Calu3 (cell line): ENCODE measurements at regions of chr18 and their contacts with region 1.

Region 1: DNA sequence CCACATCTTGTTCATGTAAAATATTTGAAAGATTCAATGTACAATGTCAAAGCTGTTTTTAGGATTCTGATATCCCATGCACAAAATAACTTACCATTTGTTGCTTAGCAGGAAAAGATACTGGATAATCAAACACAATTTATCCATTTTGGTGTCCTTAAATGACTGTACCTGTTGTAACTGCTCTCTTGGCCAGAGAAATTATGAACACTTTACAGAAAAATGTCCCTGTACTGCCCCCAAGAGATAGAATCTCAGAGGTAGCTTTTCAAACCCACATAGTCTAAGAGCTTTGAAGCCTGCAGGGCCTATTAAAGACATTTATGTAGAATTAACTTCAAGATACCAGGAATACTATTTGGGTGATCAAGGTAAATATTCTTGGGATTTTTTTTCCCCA is 12.2 kb upstream of the ME2 start:
- DNase-seq: no peak
- H3K4me3 Mint-ChIP-seq: no peak overlapping the region
- H3K27ac Mint-ChIP-seq: no peak overlapping the region
- H3K4me1 Mint-ChIP-seq: peaks cover 16% of the 10 kb centered on the region
- H3K27me3 Mint-ChIP-seq: no peaks in the 10 kb centered on the region
- CTCF ChIP-seq: no peak

Region 2: DNA sequence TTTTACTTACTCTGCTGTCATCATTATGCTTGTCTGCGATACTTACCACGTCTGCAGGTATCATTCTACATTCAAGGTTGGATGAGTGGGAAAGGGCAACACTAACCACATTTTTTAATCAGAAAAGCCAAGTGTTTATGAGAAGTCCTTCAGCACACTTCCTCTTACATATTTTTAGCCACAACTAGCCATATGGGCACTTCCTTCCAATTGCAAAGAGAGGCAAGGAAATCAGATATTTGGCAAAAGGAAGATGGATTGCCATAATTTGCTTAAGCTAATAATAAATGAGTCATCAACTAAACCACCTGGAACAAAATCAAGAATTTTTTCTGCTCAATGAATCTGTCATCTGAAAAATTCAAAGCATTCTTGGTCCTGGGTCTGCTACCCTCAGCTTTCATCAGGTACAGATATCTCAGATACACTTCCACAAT is 30.2 kb before region 1 on chr18:
- CTCF ChIA-PET with region 1: interaction called, 4 read pairs
- intact Hi-C with region 1: loop called (anchors 1 kb)
- DNase-seq: peak; percentile 51
- H3K4me3 Mint-ChIP-seq: no peak overlapping the region
- H3K27ac Mint-ChIP-seq: peak overlapping the region; percentile 87
- H3K4me1 Mint-ChIP-seq: peaks cover 42% of the 10 kb centered on the region
- H3K27me3 Mint-ChIP-seq: no peaks in the 10 kb centered on the region
- CTCF ChIP-seq: no peak

Region 3: GRCh38 chr18:50853863-50854271 is 12.9 kb before region 1 on chr18:
- CTCF ChIA-PET with region 1: no interaction called
- intact Hi-C with region 1: loop called (anchors 2 kb)
- DNase-seq: peak; percentile 42
- H3K4me3 Mint-ChIP-seq: peak overlapping the region; percentile 13
- H3K27ac Mint-ChIP-seq: peak overlapping the region; percentile 50
- H3K4me1 Mint-ChIP-seq: peaks cover 53% of the 10 kb centered on the region
- H3K27me3 Mint-ChIP-seq: no peaks in the 10 kb centered on the region
- CTCF ChIP-seq: no peak

Region 4: DNA sequence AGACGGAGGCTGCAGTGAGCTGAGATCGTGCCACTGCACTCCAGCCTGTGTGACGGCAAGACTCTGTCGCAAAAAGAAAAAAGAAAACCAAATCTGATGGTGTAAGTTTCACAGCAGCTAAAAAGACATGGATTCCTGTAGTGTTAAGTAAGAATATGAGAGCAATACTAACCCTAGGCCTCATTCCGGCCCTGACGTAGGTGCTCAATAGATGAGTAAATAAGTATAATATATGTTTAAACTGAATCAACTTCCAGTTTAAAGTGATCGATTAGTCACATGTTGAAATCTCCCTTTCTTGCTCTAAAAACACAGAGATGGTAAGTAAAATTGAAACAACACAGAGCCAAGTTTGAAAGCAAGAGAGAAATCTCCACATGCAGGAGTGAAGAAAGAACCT is 20.2 kb after region 1 on chr18:
- CTCF ChIA-PET with region 1: no interaction called
- intact Hi-C with region 1: no loop called
- DNase-seq: no peak
- H3K4me3 Mint-ChIP-seq: no peak overlapping the region
- H3K27ac Mint-ChIP-seq: no peak overlapping the region
- H3K4me1 Mint-ChIP-seq: no peaks in the 10 kb centered on the region
- H3K27me3 Mint-ChIP-seq: no peaks in the 10 kb centered on the region
- CTCF ChIP-seq: no peak